Left cardiac atrium (tissue), 4 donors: ENCODE measurements at regions of chr16 and their contacts with region 1.

Region 1: DNA sequence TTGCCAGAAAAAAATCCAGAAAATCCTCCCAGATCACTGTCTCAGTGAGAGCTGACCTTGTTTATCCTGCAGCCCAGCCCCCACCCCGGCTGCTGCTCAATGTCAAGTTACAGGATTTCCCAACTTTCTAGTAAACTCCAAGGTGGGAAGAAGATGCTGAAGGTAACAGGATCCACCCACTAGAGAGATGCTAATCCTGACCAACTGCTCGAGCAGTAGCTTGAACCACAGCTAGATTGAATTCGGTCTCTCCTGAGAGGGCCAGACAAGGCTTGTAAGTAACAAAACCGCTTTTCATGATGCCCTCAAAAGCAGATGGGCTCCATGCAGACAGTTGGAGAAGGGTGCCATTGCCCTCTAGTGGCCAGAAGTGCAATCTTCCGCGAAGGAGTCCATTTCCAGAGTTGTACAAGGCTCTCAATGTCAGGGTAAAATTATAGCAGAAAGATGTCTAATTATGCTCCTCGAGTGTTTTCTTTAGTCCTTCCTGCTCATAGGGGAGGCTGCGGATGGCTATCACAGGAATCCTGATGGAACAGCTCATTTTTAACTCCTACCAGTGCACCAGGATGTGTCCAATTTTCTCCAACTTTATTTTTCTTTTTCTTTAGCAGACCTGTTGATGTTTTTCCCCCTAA is 3.9 kb downstream of the CDH11 start:
- DNase-seq: peak; percentile 69
- ATAC-seq: peak; percentile 13 to 38

Region 2: GRCh38 chr16:63461248-63461841 is 1656.6 kb before region 1 on chr16:
- intact Hi-C with region 1: loop called in 1 of 2 experiments (anchors 10 kb)
- DNase-seq: no peak
- ATAC-seq: peak in 1 of 2 donors; percentile 21

Region 3: GRCh38 chr16:64094992-64095634 is 1022.8 kb before region 1 on chr16:
- intact Hi-C with region 1: loop called in 1 of 2 experiments (anchors 5 kb)
- DNase-seq: no peak
- ATAC-seq: no peak

Region 4: GRCh38 chr16:64469906-64470702 is 647.8 kb before region 1 on chr16:
- intact Hi-C with region 1: loop called in 1 of 2 experiments (anchors 5 kb)
- DNase-seq: peak; percentile 20
- ATAC-seq: no peak

Region 5: GRCh38 chr16:64969221-64969620 is 148.7 kb before region 1 on chr16:
- intact Hi-C with region 1: no loop called
- DNase-seq: no peak
- ATAC-seq: no peak

Region 6: DNA sequence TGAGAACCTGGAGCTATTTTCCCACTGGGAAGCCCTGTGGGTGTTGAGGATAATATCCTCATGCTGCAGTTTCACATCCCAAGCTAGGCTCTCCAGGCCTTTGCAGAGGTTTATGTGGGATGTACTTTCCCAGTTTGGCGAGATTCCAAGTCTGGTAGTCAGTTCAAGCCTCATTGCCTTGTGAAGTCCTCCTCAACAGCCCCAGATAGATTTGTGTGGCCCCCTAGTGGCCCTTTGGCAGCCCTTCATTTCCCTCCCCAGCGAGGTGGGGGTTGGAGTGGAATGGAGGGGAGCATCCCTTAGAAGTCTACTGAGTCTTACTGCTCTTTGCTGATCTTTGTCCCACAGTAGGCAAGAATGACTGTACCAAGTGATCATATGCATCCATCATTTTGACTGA is 134.0 kb before region 1 on chr16:
- intact Hi-C with region 1: loop called in 1 of 2 experiments (anchors 10 kb)
- DNase-seq: peak; percentile 33
- ATAC-seq: peak; percentile 68 to 84